Activated naive CD4-positive, alpha-beta T cell treated with anti-CD3 and anti-CD28 coated beads, Interleukin-2, amount 10 ng/mL, durations not matched to agents 7 days and 5 days (primary cell): ENCODE measurements at regions of chr12 and their contacts with region 1.

Region 1: DNA sequence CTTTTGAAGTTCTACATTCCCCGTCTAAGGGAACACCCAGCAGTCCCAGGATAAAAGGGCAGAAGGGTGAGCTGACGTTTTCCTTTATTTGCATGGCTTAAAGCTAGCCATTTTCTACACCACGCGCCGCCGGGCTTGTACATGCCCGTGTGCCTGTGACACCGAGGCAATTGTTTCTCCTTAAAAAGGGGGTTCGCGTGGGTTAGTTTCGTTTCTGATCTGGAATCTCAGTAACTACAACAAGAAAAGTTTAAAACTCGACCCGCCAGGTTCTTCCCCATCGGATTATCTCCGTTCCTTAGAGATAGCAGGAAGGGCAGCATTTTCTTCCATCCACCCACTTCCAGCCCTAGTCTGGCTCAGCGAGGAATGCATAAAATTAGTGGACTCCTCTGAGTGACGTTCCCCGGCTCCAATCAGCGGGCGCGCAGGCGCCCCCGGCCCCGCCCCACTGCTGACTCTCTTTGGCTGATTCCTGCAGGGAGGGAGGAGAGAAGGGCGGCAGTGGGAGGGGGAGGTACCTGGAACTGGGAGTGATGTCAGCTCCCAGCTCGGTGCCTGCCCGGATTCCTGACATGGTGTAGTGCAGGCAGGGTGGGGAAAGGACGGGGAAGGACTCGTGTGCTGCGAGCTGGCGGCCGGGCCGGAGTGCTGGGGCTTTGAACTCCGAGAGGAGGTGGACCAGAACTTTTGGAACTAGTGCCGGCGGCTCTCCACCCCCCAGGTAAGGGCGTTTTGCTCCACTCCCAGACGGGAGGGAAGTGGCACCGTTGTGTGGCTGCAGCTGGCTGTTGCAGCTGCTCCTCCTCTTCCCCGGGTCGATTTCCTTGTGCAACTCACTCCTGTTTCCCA is at the start of gene PPFIBP1:
- DNase-seq: peak; percentile 99
- H3K4me3 Mint-ChIP-seq: peak within 1 kb of the TSS; percentile 94
- H3K27ac Mint-ChIP-seq: peak within 1 kb of the TSS; percentile 90
- H3K4me1 Mint-ChIP-seq: peaks cover 40% of the 10 kb centered on the region
- H3K27me3 Mint-ChIP-seq: peaks cover 32% of the 10 kb centered on the region

Region 2: GRCh38 chr12:27424631-27425230 is 99.1 kb before region 1 on chr12:
- CTCF ChIA-PET with region 1: interaction called, 12 read pairs
- DNase-seq: peak; percentile 29
- H3K4me3 Mint-ChIP-seq: no peak overlapping the region
- H3K27ac Mint-ChIP-seq: no peak overlapping the region
- H3K4me1 Mint-ChIP-seq: peaks cover 8% of the 10 kb centered on the region
- H3K27me3 Mint-ChIP-seq: no peaks in the 10 kb centered on the region